ENCODE measurements at regions of chr12 and their contacts with region 1.

Region 1: DNA sequence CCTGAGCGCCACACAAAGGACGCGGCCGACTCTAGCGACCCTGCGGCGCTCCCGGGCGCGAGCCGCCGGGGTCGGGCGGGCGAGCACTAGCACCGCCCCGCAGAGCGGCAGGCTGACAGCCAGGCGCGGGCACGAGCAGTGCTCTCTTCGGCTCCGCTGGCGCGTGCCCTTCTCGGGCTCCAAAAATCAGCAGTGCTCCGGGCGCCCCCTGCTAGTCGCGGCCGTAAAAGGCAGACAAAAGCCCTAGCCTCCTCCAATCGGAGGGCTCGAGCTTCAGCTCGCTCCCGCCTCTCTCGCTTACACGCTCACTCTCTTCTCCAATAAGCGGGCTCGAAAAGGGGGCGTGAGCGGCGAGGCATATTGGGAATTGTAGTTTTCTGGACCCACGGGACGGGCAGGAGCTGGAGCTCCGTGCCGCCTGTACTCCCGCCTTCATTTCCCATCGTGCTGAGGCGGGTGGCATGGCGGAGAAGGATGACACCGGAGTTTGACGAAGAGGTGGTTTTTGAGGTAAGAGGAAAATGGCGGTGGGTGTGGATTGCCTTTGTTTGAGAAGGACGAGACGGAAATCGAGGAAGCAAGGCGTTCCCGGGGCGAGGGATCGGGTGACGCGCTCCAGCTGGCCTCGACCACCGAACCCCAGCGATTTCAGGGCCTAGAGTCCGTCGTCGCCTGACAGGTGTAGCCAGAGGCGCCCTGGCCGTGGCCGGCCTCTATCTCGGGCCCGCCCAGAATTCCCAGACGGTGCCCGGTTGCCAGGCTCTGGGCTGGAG is at the starts of genes FGD6 and VEZT:
- DNase-seq: peak; percentile 99
- H3K4me3 Mint-ChIP-seq: peak within 1 kb of the TSS; percentile 84
- H3K27ac Mint-ChIP-seq: peak within 1 kb of the TSS; percentile 90
- H3K4me1 Mint-ChIP-seq: peaks cover 21% of the 10 kb centered on the region
- H3K27me3 Mint-ChIP-seq: no peaks in the 10 kb centered on the region
- CTCF ChIP-seq: peak; percentile 65
- total RNA-seq, gene FGD6: 17.2 and 25.1 TPM in 2 replicates
- total RNA-seq, gene VEZT: 88.1 and 107 TPM in 2 replicates

Region 2: GRCh38 chr12:95117178-95117599 is 100.4 kb before region 1 on chr12:
- CTCF ChIA-PET with region 1: interaction called, 50 read pairs
- POLR2A ChIA-PET with region 1: interaction called, 158 read pairs
- intact Hi-C with region 1: loop called (anchors 1 kb)
- DNase-seq: peak; percentile 86
- H3K4me3 Mint-ChIP-seq: peak overlapping the region; percentile 38
- H3K27ac Mint-ChIP-seq: peak overlapping the region; percentile 78
- H3K4me1 Mint-ChIP-seq: peaks cover 28% of the 10 kb centered on the region
- H3K27me3 Mint-ChIP-seq: no peaks in the 10 kb centered on the region
- CTCF ChIP-seq: peak; percentile 48

Region 3: DNA sequence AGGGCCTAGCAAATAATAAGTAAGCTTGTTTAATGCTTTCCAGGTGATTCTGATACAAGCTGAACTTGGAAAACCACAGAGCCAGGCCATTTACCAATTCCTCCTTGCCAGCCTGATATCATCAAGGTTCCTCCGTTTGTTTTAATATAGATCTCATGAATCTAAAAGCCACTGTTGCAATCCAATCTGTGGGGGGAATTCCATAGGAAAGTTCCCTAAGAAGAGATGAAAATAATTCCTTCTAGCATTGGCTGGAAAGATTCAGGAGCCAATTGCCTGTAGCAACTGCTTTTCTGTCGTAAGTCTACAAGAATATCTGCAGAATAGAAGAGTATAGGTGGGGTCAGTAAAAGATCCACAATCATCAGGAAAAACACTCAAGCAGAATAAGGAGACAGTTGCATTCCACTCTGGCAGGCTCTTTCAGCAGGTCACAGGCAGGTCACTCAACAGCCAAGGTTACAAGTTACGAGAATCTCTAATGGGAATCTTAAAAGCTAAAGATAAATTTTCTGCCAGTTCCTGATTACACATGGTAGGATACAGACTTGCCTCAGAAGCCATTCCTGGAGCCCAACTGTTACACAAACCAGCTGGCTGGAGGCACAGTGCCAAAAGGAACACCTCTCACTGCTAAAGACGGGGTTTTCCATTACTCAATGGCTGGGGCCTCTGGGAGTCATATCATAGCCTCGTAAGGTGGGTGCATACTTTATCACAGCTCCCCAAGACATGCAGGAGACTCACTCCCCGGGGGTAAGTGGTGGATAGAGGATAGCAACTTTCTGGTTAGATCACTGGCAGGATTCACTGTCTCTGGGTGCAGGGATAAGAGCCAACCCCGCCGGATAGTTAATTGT is 43.9 kb before region 1 on chr12:
- CTCF ChIA-PET with region 1: interaction called, 9 read pairs
- POLR2A ChIA-PET with region 1: interaction called, 32 read pairs
- intact Hi-C with region 1: loop called (anchors 2 kb)
- DNase-seq: peak; percentile 92
- H3K4me3 Mint-ChIP-seq: no peak overlapping the region
- H3K27ac Mint-ChIP-seq: peak overlapping the region; percentile 31
- H3K4me1 Mint-ChIP-seq: peaks cover 26% of the 10 kb centered on the region
- H3K27me3 Mint-ChIP-seq: no peaks in the 10 kb centered on the region
- CTCF ChIP-seq: no peak

Region 4: DNA sequence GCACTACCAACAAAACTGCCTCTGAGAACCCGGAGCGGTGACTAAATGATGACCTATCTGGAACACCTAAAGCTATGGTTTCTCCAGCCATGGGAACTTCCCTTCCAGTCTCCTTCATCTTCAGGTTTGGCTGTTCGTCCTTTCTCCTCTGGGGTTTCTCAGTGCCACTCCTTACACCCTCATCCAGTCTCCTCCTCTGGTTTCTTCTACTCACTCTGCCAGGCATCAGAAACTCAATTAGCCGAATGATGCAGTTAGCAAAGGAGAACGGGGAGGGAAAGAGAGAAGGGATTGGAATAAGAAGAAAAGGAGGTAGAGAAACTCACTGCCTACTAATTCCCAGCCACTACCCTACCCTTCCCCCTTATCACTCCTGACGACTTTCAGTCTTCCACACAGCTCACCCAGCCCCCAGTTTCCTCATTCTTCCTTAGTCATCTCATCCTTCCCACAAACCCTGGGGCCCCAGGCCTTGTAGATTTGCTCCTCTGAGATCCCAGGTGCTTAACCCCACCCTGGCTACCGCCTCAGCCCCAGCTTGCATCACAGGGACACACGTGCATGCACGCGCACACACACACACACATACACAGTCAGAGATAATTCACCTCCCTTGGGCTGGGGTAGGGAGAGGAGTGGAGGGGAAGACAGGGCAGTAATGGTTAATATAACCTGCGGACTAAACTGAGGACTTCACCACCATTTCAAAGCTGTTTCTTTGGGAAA is 13.3 kb before region 1 on chr12:
- CTCF ChIA-PET with region 1: interaction called, 46 read pairs
- POLR2A ChIA-PET with region 1: interaction called, 1,056 read pairs
- intact Hi-C with region 1: loop called (anchors 1 kb)
- DNase-seq: peak; percentile 100
- H3K4me3 Mint-ChIP-seq: peak overlapping the region; percentile 77
- H3K27ac Mint-ChIP-seq: peak overlapping the region; percentile 98
- H3K4me1 Mint-ChIP-seq: peaks cover 45% of the 10 kb centered on the region
- H3K27me3 Mint-ChIP-seq: no peaks in the 10 kb centered on the region
- CTCF ChIP-seq: no peak

Region 5: DNA sequence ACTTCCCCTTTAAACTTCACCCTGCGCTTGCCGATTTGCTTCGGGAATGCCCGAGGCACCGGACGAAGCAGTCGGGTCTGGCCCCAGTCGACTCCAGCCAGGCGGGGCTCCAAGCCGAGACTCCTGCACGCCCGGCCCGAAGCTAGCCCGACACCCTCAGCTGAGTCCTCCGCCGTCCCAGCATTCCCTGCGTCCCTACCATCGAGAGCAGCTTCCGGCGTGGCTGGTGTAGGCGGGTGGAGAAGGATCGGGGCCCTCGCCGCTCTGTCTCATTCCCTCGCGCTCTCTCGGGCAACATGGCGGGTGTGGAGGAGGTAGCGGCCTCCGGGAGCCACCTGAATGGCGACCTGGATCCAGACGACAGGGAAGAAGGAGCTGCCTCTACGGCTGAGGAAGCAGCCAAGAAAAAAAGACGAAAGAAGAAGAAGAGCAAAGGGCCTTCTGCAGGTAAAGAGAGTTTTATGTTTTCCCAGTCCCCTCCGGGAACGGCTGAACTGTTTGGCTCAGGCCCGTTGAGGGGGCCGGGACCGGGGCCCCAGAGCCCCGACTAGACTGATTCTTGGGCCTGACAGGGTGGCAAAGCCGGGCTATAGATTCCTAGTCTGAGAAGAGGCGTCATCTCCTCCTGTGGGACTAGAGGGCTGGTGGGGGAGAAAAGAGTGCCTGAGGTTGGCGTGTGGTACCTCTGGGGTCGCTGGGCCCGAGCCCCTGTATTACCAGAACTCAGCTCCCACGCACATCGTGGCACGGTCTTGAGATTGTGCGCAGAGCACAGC is 256.5 kb after region 1 on chr12 and contains the start of gene METAP2:
- CTCF ChIA-PET with region 1: no interaction called
- POLR2A ChIA-PET with region 1: interaction called, 45 read pairs
- intact Hi-C with region 1: loop called (anchors 2 kb)
- DNase-seq: peak; percentile 98
- H3K4me3 Mint-ChIP-seq: peak within 1 kb of the TSS; percentile 90
- H3K27ac Mint-ChIP-seq: peak within 1 kb of the TSS; percentile 99
- H3K4me1 Mint-ChIP-seq: peaks cover 16% of the 10 kb centered on the region
- H3K27me3 Mint-ChIP-seq: no peaks in the 10 kb centered on the region
- CTCF ChIP-seq: no peak
- total RNA-seq, gene METAP2: 91.5 and 122 TPM in 2 replicates

Region 6: DNA sequence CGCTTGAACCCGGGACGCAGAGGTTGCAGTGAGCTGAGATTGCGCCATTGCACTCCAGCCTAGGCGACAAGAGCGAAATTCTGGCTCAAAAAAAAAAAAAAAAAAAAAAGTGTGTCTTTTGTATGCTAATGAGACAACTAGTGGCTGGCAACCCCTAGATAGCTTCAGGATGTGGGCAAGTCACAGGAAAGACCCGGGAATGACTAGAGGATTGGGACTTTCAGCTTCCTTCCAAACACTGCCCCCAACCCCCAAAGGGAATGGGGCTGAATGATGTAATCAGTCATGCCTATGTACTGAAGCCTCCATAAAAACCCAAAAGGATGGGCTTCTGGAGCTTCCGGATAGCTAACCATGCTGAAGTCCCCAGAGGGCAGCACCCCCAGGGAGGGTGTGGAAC is 305.1 kb after region 1 on chr12:
- CTCF ChIA-PET with region 1: no interaction called
- POLR2A ChIA-PET with region 1: no interaction called
- intact Hi-C with region 1: no loop called
- DNase-seq: no peak
- H3K4me3 Mint-ChIP-seq: no peak overlapping the region
- H3K27ac Mint-ChIP-seq: no peak overlapping the region
- H3K4me1 Mint-ChIP-seq: no peaks in the 10 kb centered on the region
- H3K27me3 Mint-ChIP-seq: no peaks in the 10 kb centered on the region
- CTCF ChIP-seq: no peak